ENCODE measurements at regions of chr12 and their contacts with region 1.

Region 1: DNA sequence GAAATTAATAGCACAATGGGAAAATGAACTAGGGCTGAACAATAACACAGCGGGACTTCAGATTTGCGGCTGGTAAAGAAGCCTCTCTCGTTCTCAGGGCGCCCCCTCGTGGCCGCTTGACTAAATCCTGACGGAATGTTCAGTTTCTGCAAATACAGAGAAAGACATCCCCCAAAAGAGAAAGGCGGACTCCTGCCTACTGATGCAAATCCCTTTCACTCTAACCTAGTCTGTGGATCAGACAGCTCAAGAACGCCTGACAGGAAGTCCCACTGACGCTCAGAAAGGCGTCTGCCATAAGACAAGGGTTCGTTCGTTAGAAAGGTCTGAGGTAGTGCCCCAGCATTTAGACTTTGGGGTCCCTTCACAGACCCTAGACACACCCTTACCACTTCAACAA is 2.5 kb downstream of the NUAK1 start:
- DNase-seq: no peak
- ATAC-seq: peak; percentile 80
- H3K4me3 ChIP-seq: no peak overlapping the region
- H3K27ac ChIP-seq: no peak overlapping the region
- H3K4me1 ChIP-seq: no peaks in the 10 kb centered on the region
- H3K27me3 ChIP-seq: peaks cover 7 to 26% of the 10 kb centered on the region in 2 experiments
- CTCF ChIP-seq: peak; percentile 61 to 88 (median 72)
- EP300 ChIP-seq: no peak
- POLR2A ChIP-seq: no peak
- RAD21 ChIP-seq: peak; percentile 89

Region 2: DNA sequence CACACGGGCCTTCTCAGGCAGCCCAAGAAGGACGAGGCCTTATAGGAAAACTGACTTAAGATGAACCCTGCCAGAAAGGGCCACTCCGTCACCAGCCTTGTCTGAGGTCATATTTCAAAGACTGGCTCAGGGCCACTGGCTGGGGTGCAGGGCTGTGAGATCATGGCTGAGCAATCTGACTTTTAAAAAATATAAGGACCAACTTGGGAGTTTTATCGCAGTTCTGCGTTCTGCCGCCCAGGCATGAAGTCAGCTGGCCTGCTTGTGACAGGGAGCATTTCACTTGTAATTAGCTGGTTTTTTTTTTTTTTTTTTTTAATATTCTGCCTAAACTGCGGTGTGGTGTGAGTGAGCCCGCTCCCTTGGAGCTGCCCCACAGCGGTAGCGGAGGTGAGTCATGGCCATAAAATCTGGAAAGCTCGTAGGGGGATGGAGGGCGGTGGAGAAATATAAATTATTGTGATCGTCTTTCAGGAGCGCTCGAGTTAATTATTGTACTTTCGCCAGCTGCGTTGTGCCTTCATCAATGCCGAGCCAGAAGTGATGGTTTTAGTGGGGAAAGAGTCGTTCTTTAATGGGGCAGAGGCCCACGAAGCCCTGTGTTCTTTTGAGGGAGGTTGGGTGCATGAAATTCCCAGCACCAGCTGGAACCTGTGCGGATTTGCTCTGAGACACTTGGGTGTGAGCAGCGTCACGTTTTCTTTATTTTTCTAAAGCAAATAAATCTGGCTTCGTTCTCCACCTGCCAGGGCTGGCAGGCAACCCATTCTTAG is 573.9 kb before region 1 on chr12:
- CTCF ChIA-PET with region 1: no interaction called
- POLR2A ChIA-PET with region 1: no interaction called
- RAD21 ChIA-PET with region 1: no interaction called
- SMC1A ChIA-PET with region 1: no interaction called
- in situ Hi-C with region 1: no loop called
- intact Hi-C with region 1: no loop called
- DNase-seq: no peak
- ATAC-seq: no peak
- H3K4me3 ChIP-seq: no peak overlapping the region
- H3K27ac ChIP-seq: no peak overlapping the region
- H3K4me1 ChIP-seq: no peaks in the 10 kb centered on the region
- H3K27me3 ChIP-seq: no peaks in the 10 kb centered on the region
- CTCF ChIP-seq: no peak
- EP300 ChIP-seq: no peak
- POLR2A ChIP-seq: no peak
- RAD21 ChIP-seq: no peak

Region 3: DNA sequence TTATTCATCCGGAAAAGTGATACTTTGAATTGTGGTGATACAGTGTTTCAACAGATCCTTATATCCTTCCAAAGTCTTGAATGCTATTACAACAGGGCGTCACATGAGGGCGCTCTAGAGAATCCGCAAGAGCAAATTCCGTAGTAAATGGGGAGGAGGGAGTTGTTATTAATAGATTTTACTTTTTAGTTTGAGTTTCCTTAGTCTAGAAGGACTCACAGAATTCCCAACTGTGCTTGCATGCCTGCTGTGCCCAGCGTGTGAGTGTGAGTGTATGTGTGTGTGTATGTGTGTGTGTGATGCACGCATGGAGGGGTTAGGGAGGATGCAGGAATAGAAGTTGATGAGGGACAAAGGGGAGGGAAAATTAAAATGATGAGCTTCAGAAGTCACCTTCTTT is 430.5 kb before region 1 on chr12:
- CTCF ChIA-PET with region 1: interaction called, 58 read pairs
- POLR2A ChIA-PET with region 1: no interaction called
- RAD21 ChIA-PET with region 1: interaction called, 13 read pairs
- SMC1A ChIA-PET with region 1: interaction called, 17 read pairs
- in situ Hi-C with region 1: loop called (anchors 5 kb)
- intact Hi-C with region 1: loop called (anchors 1 kb)
- DNase-seq: no peak
- ATAC-seq: peak; percentile 32; the same call in 1 of the 3 replicates
- H3K4me3 ChIP-seq: no peak overlapping the region
- H3K27ac ChIP-seq: no peak overlapping the region
- H3K4me1 ChIP-seq: no peaks in the 10 kb centered on the region
- H3K27me3 ChIP-seq: no peaks in the 10 kb centered on the region
- CTCF ChIP-seq: peak; percentile 37 to 70 (median 54); a peak in 5 of 6 replicates
- EP300 ChIP-seq: no peak
- POLR2A ChIP-seq: no peak
- RAD21 ChIP-seq: peak; percentile 56

Region 4: GRCh38 chr12:105954951-105955931 is 181.0 kb before region 1 on chr12:
- CTCF ChIA-PET with region 1: no interaction called
- POLR2A ChIA-PET with region 1: no interaction called
- RAD21 ChIA-PET with region 1: no interaction called
- SMC1A ChIA-PET with region 1: no interaction called
- in situ Hi-C with region 1: no loop called
- intact Hi-C with region 1: loop called (anchors 10 kb)
- DNase-seq: no peak
- ATAC-seq: no peak
- H3K4me3 ChIP-seq: no peak overlapping the region
- H3K27ac ChIP-seq: no peak overlapping the region
- H3K4me1 ChIP-seq: no peaks in the 10 kb centered on the region
- H3K27me3 ChIP-seq: no peaks in the 10 kb centered on the region
- CTCF ChIP-seq: no peak
- EP300 ChIP-seq: no peak
- POLR2A ChIP-seq: no peak
- RAD21 ChIP-seq: no peak

Region 5: DNA sequence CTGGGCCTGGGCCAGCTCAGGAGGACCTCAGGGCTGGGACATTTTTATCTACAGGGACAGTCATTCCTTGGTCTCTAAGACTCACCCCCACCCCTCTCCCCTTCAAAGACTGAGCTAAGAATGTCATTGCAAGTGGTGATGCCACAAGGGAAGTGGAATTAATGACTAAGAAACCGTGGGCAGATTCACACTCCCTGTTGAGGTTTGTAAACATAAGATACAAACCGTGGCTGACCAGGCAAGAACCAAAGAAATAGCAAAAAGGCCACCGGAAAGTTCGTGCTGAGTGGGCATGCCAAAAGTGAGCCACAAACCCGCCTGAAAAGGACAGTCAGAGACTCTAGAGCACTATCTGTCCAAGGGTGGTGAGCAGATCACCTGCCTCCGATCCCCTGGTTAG is 23.2 kb before region 1 on chr12:
- CTCF ChIA-PET with region 1: interaction called, 12 read pairs
- POLR2A ChIA-PET with region 1: no interaction called
- RAD21 ChIA-PET with region 1: interaction called, 6 read pairs
- SMC1A ChIA-PET with region 1: interaction called, 3 read pairs
- in situ Hi-C with region 1: no loop called
- intact Hi-C with region 1: no loop called
- DNase-seq: peak; percentile 7
- ATAC-seq: peak; percentile 72
- H3K4me3 ChIP-seq: no peak overlapping the region
- H3K27ac ChIP-seq: no peak overlapping the region
- H3K4me1 ChIP-seq: no peaks in the 10 kb centered on the region
- H3K27me3 ChIP-seq: peaks cover 0 to 3% of the 10 kb centered on the region in 2 experiments; a peak in 2 of 4 replicates
- CTCF ChIP-seq: no peak
- EP300 ChIP-seq: peak; percentile 12 to 49; a peak in 1 of 4 replicates
- POLR2A ChIP-seq: no peak
- RAD21 ChIP-seq: no peak

Region 6: GRCh38 chr12:106149096-106149784 is 13.0 kb after region 1 on chr12:
- CTCF ChIA-PET with region 1: interaction called, 33 read pairs
- POLR2A ChIA-PET with region 1: no interaction called
- RAD21 ChIA-PET with region 1: interaction called, 6 read pairs
- SMC1A ChIA-PET with region 1: interaction called, 8 read pairs
- in situ Hi-C with region 1: no loop called
- intact Hi-C with region 1: no loop called
- DNase-seq: no peak
- ATAC-seq: peak; percentile 61
- H3K4me3 ChIP-seq: no peak overlapping the region
- H3K27ac ChIP-seq: no peak overlapping the region
- H3K4me1 ChIP-seq: no peaks in the 10 kb centered on the region
- H3K27me3 ChIP-seq: no peaks in the 10 kb centered on the region; a peak in 2 of 4 replicates
- CTCF ChIP-seq: peak; percentile 43 to 51 (median 48); a peak in 5 of 6 replicates
- EP300 ChIP-seq: no peak
- POLR2A ChIP-seq: no peak
- RAD21 ChIP-seq: 0 out of 2 replicates have a peak, but pooled peaks have one; percentile 19

Region 7: DNA sequence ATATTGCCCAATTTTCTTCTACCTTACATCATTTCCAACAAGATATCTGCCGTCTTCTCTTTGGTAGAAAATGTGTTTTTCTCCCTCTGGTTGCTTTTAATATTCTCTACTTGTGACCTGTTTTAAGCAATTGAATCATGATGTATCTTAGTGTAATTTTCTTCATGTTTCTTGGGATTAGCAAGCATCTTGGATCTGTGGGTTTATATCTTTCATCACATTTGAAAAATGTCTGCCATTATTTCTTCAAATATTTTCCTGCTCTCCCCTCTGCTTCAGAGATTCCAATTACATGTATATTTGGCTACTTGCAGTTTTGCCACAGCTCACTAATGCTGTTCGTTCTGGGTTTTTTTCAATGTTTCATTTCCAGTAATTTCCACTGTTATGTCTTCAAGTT is 81.4 kb after region 1 on chr12:
- CTCF ChIA-PET with region 1: no interaction called
- POLR2A ChIA-PET with region 1: no interaction called
- RAD21 ChIA-PET with region 1: no interaction called
- SMC1A ChIA-PET with region 1: no interaction called
- in situ Hi-C with region 1: no loop called
- intact Hi-C with region 1: no loop called
- DNase-seq: no peak
- ATAC-seq: no peak
- H3K4me3 ChIP-seq: no peak overlapping the region
- H3K27ac ChIP-seq: no peak overlapping the region
- H3K4me1 ChIP-seq: no peaks in the 10 kb centered on the region
- H3K27me3 ChIP-seq: no peaks in the 10 kb centered on the region; a peak in 2 of 4 replicates
- CTCF ChIP-seq: no peak
- EP300 ChIP-seq: no peak
- POLR2A ChIP-seq: no peak
- RAD21 ChIP-seq: no peak